Activated naive CD4-positive, alpha-beta T cell treated with anti-CD3 and anti-CD28 coated beads for 36 hours (primary cell): ENCODE measurements at regions of chrX and their contacts with region 1.

Region 1: DNA sequence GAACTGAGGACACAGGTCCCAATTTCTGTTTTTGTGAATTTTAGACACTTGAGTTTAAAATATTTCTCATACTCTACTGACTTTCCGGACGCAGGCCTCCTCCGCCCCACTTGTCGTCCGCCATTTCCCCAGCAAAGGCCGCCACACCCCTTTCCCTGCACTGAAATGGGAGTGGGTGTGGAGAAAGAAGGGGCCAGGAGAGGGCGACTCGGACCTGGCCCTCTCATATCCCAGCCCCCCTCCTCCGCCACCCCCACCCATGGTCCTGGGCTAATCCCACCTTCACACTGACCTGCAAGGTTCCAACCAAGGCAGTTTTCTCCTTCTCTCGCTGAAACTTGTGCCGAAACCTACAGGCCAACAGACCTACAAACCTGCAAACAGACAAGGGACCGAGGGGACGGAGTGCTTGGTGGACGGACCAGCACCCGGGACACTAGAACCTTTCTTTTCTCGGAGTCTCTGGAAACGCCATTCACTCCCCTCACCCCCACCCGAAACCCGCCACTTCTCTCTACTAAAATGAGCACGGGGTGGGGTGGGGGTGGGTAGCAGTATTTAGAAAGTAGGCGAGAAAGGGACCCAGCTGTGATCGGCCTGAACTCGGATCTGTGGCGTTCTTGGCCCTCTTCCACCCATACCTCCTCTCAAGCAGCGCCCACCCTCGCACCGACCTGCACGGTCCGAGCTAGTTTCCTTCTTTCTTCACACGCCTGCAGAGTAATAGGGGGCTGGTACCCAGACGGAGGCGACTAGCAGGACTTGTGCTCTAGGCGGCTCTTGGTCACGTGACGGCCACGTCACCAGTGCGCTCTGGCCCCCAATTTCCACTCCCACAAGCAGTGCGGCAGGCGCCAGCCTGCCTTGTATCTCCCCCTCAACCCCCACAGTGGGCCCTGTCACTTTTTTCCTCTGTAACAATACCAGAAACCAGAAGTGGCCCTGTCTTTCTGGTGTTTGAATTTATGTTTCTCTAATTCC is at the start of gene ARMCX6:
- DNase-seq: peak; percentile 70
- H3K4me3 Mint-ChIP-seq: peak within 1 kb of the TSS; percentile 85
- H3K27ac Mint-ChIP-seq: peak within 1 kb of the TSS; percentile 88
- H3K4me1 Mint-ChIP-seq: peaks cover 38% of the 10 kb centered on the region
- H3K27me3 Mint-ChIP-seq: no peaks in the 10 kb centered on the region
- total RNA-seq, gene ARMCX6: 30.7 to 31.6 TPM

Region 2: GRCh38 chrX:101744085-101744484 is 126.6 kb after region 1 on chrX:
- CTCF ChIA-PET with region 1: no interaction called
- intact Hi-C with region 1: loop called (anchors 5 kb)
- DNase-seq: no peak
- H3K4me3 Mint-ChIP-seq: no peak overlapping the region
- H3K27ac Mint-ChIP-seq: no peak overlapping the region
- H3K4me1 Mint-ChIP-seq: no peaks in the 10 kb centered on the region
- H3K27me3 Mint-ChIP-seq: no peaks in the 10 kb centered on the region

Region 3: DNA sequence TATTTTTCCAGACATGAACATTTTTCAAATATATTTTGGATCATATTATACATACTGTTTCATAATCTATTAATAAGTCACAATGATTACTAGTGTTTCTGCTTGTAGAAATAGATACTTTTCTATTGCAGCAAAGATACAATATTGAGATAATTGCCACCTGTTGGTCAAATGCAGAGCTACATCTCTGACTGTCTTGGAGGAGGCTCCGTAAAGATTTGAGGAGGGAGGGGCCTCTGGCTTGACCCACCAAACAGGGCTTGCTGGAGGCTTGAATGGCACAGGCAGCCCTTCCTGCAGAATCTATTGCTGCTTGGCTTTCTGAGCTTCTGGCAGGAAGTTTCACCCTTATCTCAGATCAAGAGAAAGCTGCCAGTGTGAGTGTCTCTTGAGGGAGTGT is 141.5 kb after region 1 on chrX:
- CTCF ChIA-PET with region 1: interaction called, 5 read pairs
- intact Hi-C with region 1: loop called (anchors 5 kb)
- DNase-seq: peak; percentile 31
- H3K4me3 Mint-ChIP-seq: no peak overlapping the region
- H3K27ac Mint-ChIP-seq: no peak overlapping the region
- H3K4me1 Mint-ChIP-seq: peaks cover 2% of the 10 kb centered on the region
- H3K27me3 Mint-ChIP-seq: no peaks in the 10 kb centered on the region